ENCODE measurements at regions of chr19 and their contacts with region 1.

Region 1: GRCh38 chr19:7919610-7920518 is at the start of gene SNAPC2:
- H3K4me3 ChIP-seq: peak within 1 kb of the TSS; percentile 80
- H3K27ac ChIP-seq: peak within 1 kb of the TSS; percentile 49; the same call in 1 of the 2 replicates
- H3K4me1 ChIP-seq: peaks cover 3% of the 10 kb centered on the region; the same call in 1 of the 2 replicates
- CTCF ChIP-seq: no peak

Region 2: DNA sequence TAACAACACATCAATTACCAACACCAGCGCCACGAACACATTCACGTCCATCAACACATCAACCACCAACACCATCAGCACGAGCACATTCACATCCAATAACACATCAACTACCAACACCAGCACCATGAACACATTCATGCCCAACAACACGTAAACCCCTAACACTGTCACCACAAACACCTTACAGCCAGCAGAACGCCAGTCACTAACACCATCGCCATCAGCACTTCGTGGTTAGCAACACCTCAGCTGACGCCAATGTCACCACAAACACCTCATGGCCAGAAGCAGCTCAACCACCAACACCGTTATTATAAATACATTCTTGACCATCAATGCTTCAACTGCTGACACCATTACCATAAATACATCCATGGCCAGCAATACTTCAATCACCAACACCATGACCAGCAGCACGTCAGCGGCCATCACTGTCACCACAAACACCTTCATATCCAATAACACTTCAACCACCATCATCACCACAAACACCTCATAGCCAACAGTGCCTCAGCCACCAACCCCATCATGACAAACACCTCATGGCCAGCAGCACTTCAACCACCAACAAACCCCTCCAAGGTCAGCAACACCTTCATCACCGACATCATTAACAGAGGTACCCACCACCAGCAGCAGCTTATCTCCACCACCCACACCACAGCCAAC is 227.3 kb before region 1 on chr19:
- CTCF ChIA-PET with region 1: no interaction called
- POLR2A ChIA-PET with region 1: no interaction called
- H3K4me3 ChIP-seq: no peak overlapping the region
- H3K27ac ChIP-seq: no peak overlapping the region
- H3K4me1 ChIP-seq: no peaks in the 10 kb centered on the region
- CTCF ChIP-seq: no peak

Region 3: DNA sequence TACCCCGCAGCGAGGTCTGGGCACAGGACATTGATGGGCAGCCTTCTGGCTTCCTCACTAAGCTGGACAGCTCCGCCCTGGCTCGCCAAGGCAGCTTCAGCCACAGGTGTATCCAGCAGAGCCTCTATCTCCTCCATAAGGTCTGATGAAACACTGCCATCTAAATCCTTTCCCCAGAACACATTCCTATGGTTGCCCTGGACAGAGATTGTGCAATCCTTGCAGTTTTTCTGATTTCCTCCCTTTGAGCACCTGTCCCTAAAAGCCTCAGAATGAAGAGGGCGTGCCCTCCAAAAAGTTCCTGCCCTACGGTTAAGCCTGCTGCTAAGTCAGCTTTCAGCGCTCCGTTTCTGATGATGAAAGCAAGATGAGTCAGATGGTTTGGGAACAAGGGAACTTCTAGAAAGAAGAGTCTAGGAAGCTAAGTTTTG is 135.9 kb before region 1 on chr19:
- CTCF ChIA-PET with region 1: no interaction called
- POLR2A ChIA-PET with region 1: no interaction called
- H3K4me3 ChIP-seq: no peak overlapping the region
- H3K27ac ChIP-seq: no peak overlapping the region
- H3K4me1 ChIP-seq: no peaks in the 10 kb centered on the region
- CTCF ChIP-seq: no peak

Region 4: DNA sequence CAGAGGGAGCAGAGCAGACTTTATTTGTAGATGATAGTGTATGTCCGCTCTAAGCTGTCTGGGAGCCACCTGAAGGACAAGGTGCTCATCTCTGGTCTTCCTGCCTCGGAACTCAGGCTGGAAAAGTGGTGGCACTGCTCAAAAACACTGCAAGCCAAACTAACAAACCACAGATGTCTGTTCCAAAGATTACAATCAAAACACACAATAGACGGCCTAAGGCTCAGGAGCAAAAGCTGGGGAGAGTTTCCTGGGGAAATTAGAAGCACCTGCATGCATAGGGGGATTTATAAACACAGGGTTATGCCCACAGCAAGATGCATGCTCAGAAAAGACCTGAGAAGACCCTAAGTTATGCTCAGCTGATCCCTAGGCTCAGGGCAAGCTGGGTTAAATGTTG is 99.3 kb before region 1 on chr19:
- CTCF ChIA-PET with region 1: no interaction called
- POLR2A ChIA-PET with region 1: no interaction called
- H3K4me3 ChIP-seq: no peak overlapping the region
- H3K27ac ChIP-seq: no peak overlapping the region
- H3K4me1 ChIP-seq: no peaks in the 10 kb centered on the region
- CTCF ChIP-seq: no peak

Region 5: DNA sequence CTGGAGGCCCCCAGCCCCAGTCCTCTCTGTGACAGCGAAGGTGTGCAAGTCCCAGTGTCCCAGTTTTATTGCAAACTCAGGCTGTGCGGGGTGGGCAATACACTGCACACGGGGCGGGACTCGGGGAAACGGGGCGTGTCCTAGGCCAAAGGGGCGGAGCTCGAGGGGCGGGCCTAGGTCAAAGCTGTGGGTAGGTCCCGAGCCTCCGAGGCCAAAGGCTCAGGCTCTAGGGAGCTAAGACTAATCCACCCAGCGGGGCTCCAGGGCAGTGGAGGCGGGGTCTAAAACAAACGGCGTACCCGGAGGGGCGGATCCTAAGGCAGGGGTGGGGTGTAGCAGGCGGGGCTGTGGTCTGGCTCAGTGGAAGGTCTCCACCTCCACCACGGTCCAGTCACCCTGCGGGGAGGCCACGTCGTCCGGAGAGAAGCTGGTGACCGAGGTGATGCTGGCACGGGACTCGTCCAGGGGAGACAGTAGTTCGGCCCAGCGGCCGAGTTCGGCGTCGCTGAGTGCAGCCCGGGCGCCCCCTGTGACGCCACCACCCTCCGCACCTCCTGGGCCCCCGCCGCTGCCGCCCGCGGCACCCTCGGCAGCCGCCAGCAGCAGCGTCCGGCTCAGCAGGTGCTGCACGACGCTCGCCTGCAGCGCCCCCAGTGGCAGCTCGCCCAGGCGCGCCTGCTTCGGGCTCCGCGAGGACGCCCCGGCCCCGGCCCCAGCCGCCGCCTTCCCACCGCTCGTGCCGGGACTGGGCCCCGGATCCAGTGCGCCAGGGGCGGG is 51.0 kb before region 1 on chr19:
- CTCF ChIA-PET with region 1: interaction called, 25 read pairs
- POLR2A ChIA-PET with region 1: interaction called, 35 read pairs
- H3K4me3 ChIP-seq: peak overlapping the region; percentile 52
- H3K27ac ChIP-seq: peak overlapping the region; percentile 45; the same call in 1 of the 2 replicates
- H3K4me1 ChIP-seq: peaks cover 6% of the 10 kb centered on the region
- CTCF ChIP-seq: peak; percentile 72; the same call in 1 of the 2 replicates

Region 6: DNA sequence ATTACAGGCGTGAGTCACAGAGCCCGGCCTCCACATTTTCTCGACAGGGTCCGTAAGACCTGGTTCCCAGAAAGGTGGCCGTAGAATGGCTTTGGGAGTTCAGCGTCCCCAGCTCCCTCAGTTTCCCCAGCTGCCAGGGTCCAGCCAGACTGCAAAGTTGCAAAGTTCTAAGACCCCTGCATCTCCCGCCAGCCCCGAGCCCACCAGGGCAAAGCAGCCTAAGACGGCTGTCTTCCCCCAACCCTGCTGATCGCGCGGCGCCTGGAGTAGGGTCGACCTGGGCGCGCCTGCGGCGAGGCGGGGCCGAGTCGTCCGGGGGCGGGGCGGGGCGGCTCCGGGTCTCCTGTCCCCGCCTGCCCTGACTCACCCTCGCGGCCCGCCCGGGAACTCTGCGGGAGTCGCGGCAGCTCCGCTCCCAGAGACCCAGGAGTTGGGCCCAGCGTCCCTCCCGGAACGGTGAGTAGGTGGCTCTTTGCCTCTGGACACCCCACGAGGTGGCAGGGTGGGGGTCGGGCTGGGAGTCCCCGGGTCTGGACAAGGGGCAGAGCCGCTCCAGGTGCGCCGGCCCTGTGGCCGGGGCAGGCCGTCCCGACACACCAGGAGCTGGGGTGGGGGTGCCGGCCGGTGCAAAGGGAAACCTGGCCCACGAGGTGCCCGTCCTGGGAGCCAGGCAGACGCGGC is 31.6 kb before region 1 on chr19 and contains the start of gene LRRC8E:
- CTCF ChIA-PET with region 1: interaction called, 4 read pairs
- POLR2A ChIA-PET with region 1: interaction called, 14 read pairs
- H3K4me3 ChIP-seq: peak within 1 kb of the TSS; percentile 76
- H3K27ac ChIP-seq: peak within 1 kb of the TSS; percentile 54; the same call in 1 of the 2 replicates
- H3K4me1 ChIP-seq: peaks cover 9% of the 10 kb centered on the region; the same call in 1 of the 2 replicates
- CTCF ChIP-seq: no peak

Region 7: GRCh38 chr19:7903244-7904073 is 16.4 kb before region 1 on chr19 and contains the start of gene MAP2K7:
- CTCF ChIA-PET with region 1: interaction called, 6 read pairs
- POLR2A ChIA-PET with region 1: interaction called, 25 read pairs
- H3K4me3 ChIP-seq: peak within 1 kb of the TSS; percentile 90
- H3K27ac ChIP-seq: peak within 1 kb of the TSS; percentile 80
- H3K4me1 ChIP-seq: peaks cover 5% of the 10 kb centered on the region; the same call in 1 of the 2 replicates
- CTCF ChIP-seq: peak; percentile 100

Region 8: DNA sequence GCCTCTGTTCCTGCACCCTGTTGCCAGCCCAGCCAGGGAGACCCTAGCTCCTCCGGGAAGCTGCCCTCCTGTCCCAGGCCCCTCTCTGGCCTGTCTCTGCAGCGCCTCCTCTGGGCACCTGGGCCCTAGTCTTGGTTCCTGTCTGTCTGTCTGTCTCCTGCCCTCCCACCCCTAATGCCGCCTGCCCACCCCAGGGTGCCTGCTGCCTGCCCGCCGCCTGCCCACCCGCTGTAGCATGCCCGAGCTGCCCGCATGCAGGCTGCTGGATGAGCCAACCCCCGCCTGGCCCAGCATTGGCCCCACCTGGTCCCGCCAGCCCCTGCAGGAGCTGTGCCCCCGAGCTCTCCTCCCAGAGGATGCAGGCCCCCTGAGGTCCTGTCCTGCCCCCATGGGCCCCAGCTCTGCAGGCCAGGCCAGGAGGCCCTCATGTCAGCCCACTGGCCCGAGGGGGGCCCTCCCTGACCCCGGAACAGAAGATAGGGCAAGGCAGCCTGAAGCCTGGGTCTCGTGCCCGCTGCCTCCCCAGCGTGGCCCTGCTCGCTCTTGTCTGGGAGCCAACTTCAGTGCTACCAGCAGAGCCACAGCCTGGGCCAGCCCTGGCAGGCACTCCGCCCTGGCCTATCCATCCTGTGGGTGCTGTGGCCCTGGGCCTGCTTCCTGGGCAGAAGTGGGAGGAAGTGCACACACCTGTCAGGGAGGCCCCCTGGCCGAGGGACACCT is 11.0 kb before region 1 on chr19:
- CTCF ChIA-PET with region 1: interaction called, 6 read pairs
- POLR2A ChIA-PET with region 1: interaction called, 25 read pairs
- H3K4me3 ChIP-seq: no peak overlapping the region
- H3K27ac ChIP-seq: no peak overlapping the region
- H3K4me1 ChIP-seq: peaks cover 5% of the 10 kb centered on the region; the same call in 1 of the 2 replicates
- CTCF ChIP-seq: no peak

Region 9: GRCh38 chr19:7953060-7953459 is 33.2 kb after region 1 on chr19:
- CTCF ChIA-PET with region 1: no interaction called
- POLR2A ChIA-PET with region 1: no interaction called
- H3K4me3 ChIP-seq: no peak overlapping the region
- H3K27ac ChIP-seq: no peak overlapping the region
- H3K4me1 ChIP-seq: no peaks in the 10 kb centered on the region
- CTCF ChIP-seq: no peak

Region 10: GRCh38 chr19:8321060-8321985 is 401.5 kb after region 1 on chr19 and contains the starts of genes NDUFA7 and RPS28:
- CTCF ChIA-PET with region 1: interaction called, 3 read pairs
- POLR2A ChIA-PET with region 1: interaction called, 13 read pairs
- H3K4me3 ChIP-seq: peak within 1 kb of the TSS; percentile 97
- H3K27ac ChIP-seq: peak within 1 kb of the TSS; percentile 83
- H3K4me1 ChIP-seq: peaks cover 5% of the 10 kb centered on the region; the same call in 1 of the 2 replicates
- CTCF ChIP-seq: peak; percentile 81